GM13977 (cell line): ENCODE measurements at regions of chr4 and their contacts with region 1.

Region 1: DNA sequence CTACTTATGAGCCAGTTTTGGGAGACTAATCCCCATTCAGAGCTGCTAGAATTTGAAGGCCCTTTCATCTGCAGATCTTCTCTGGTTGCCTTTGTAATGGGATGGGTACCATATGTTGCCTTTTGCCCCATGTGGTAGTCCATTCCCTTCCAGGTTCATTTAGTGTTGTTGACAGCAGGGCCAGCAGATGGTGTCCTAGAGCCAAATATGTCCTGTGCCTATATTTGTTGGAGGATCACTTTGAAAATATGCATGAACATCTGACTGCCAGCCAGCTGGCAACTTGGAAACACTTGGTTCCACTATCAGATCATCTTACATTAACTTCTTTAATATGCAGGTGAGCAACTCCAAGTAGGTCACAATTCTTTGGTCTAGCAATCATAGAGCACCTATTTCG is 30.4 kb downstream of the CFAP299 start:
- DNase-seq: peak; percentile 53
- CTCF ChIP-seq: peak; percentile 74

Region 2: DNA sequence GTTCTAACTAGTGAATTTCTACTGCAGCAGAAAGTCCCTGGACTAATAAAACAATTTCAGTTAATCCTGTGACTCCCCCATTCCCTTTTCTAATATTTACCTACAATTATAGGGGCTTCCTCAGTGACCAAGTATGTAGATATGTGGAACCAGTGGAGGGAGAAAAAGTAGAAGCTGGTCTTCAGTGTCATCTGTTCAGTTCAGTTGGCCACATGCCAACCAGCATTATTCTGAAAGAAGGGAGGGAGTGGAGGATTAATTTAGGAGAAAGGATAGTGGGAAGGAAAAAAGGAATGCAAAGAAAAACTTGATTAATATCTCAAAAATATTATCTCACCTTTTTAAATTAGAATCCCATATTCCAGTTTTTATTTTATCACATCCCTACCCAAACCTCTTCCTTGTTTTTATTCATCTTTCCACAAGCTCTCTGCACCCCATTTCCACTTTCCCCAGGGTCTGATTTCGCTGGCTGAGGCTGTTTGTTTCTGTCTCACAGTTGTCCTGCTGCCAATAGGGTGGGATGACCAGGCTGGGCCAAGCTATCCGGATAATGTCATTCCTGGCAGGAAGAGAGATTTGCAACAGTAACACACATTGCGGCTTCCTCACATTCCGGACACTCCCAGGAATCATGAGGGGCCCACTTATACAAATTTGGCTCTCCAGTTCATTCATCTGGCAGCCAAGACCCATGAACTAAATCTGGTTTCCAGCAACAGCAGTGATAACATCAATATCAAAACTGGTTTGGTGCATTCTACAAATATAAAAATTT is 268.3 kb before region 1 on chr4:
- in situ Hi-C with region 1: no loop called
- DNase-seq: no peak
- CTCF ChIP-seq: no peak

Region 3: DNA sequence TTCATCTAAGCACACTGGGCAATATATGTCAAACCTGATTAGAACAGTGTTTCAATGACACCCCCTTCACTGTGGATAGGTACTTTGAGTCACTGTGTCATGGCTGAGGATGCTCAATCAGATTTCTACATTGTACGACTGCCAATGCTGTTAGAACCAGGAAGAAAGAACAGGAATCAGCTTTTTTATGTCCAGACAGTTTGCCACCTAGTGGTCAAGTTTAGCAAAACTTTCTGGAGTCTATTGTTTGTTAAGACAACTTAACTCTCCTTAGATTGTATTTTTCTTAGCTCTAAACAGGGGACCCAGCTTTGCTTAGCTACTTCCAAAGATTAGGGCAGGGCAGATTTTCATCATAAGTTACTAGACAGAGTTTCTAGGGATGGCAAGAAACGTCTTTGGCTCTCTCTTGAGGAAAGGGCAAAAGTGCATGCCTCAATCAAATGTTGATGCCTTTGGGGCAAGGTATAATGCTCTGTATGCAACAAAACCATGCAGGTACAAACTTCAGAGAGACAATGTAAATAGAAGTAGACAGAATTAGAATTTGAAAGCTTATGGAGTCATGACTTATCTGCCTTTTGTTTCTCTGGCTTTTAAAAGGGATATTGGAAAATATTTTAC is 624.1 kb after region 1 on chr4:
- in situ Hi-C with region 1: loop called (anchors 10 kb)
- DNase-seq: peak; percentile 21
- CTCF ChIP-seq: peak; percentile 65

Region 4: DNA sequence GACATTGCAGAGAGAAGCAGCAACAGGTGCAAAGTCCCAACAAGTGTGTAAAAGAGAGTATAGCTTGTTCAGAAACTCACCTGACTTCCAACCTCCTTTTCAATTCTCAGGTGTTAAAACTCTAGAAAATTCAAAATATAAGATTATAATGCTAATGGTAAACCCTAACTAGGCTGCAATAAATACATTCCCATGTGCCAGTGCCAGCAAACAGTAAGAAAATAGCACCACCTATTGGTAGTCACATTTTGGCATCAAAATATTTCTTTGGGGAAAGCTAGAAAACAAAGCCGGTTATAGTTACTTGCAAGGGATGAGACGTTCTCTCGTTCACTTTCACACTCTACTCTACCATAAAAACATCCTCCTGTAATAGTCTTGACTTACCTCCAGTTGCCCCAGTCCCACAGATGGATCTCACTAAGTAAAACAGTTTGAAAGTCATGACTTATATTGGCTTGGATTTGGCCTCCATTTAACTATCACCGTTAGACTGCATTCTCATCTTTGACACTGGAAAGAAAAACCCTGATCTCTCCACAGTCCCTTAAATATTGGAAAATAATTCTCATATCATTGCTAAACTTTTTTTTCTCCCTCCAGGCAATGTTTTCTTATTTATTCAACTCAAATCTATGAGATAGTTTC is 674.2 kb after region 1 on chr4:
- in situ Hi-C with region 1: loop called (anchors 10 kb)
- DNase-seq: no peak
- CTCF ChIP-seq: peak; percentile 70

Region 5: DNA sequence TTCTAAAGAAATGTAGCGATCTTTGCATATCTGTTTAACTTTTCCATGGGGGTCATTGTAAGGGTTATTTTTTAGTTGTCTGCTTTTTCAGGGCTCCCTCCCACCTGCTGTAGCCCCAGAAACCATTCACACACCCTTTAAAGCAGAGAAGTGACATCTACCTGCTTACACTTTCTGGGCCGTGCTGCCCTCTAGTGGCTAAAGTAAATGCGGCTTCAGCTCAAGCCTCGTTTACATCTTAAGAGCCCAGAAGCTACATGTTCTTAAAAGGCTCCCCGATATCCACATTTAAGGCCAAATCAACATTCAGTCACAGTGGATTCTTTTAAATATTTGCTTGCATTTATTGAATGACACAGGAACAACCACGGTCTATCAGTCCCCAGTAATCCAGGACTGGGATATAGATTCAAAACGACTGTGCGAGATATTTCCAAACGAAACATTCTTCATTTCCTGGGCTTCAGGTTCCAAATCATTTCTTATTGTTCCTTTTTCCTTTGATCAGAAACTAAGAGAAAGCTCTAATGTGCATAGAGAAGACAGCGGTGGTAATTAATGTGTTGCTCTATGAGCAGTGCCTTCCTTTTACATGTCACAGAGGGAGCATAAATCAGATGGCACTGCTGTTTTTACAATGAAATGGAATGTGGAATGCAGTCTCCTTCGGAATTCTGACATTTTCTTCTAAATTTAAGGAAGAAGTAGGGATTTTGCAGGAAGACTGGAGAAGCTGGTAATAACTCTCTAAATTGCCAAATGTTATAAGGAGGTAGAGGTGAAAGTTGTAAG is 985.9 kb after region 1 on chr4:
- in situ Hi-C with region 1: loop called (anchors 25 kb)
- DNase-seq: peak; percentile 45
- CTCF ChIP-seq: peak; percentile 93